ENCODE measurements at regions of chr6 and their contacts with region 1.

Region 1: GRCh38 chr6:35468181-35468979 is at the start of gene RPL10A:
- DNase-seq: peak; percentile 94 to 95
- H3K4me3 ChIP-seq: peak within 1 kb of the TSS; percentile 86
- H3K4me3 Mint-ChIP-seq: peak within 1 kb of the TSS; percentile 86
- H3K27ac Mint-ChIP-seq: peak within 1 kb of the TSS; percentile 88
- H3K4me1 ChIP-seq: peaks cover 30% of the 10 kb centered on the region
- H3K4me1 Mint-ChIP-seq: peaks cover 20% of the 10 kb centered on the region
- H3K27me3 ChIP-seq: no peaks in the 10 kb centered on the region
- H3K27me3 Mint-ChIP-seq: no peaks in the 10 kb centered on the region
- CTCF ChIP-seq: peak; percentile 94 to 96
- total RNA-seq, gene RPL10A: 1,082 and 1,106 TPM in 2 replicates

Region 2: DNA sequence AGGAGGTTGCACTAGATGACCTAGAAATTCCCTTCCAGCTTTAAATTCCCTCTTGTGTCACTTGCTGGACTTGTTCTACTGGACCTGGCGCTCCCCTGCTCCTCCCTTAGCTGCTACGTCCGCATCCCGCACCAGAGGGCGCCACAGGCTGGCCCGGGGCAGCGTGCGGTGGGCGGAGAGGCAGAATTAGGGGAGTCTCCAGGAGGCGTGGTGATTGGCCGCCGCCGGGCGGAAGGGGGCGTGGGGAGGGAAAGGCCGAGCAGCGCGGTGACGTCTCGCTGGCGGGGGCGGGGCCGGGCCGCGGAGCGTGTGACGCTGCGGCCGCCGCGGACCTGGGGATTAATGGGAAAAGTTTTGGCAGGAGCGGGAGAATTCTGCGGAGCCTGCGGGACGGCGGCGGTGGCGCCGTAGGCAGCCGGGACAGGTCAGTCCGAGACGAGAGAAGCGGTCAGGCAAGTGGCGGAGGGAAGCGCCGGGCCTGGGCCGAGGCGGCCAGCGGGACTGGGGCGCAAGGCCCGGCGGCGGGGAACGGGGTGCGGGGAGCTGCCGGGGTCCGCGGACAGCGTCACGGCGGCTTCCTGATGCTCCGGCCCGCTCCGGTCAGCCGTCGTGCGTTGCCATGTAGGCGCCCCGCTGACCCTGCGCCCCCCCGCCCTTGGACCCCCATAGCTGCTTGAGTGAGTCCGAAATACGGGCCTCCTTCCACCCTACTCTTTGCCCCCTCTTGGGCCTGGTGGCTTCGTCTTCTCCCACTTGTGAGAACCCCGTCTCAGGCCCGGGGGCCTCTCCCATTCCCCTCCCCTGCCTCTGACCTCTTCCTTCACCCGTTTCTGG is 125.9 kb before region 1 on chr6 and contains the start of gene PPARD:
- CTCF ChIA-PET with region 1: interaction called, 4 read pairs
- POLR2A ChIA-PET with region 1: interaction called, 6 read pairs
- intact Hi-C with region 1: loop called (anchors 1 kb)
- DNase-seq: peak; percentile 97 to 99
- H3K4me3 ChIP-seq: peak within 1 kb of the TSS; percentile 84
- H3K4me3 Mint-ChIP-seq: peak within 1 kb of the TSS; percentile 85
- H3K27ac Mint-ChIP-seq: peak within 1 kb of the TSS; percentile 78
- H3K4me1 ChIP-seq: peaks cover 6% of the 10 kb centered on the region
- H3K4me1 Mint-ChIP-seq: no peaks in the 10 kb centered on the region
- H3K27me3 ChIP-seq: no peaks in the 10 kb centered on the region
- H3K27me3 Mint-ChIP-seq: no peaks in the 10 kb centered on the region
- CTCF ChIP-seq: peak; percentile 88 to 97
- total RNA-seq, gene PPARD: 11.3 and 12.0 TPM in 2 replicates

Region 3: DNA sequence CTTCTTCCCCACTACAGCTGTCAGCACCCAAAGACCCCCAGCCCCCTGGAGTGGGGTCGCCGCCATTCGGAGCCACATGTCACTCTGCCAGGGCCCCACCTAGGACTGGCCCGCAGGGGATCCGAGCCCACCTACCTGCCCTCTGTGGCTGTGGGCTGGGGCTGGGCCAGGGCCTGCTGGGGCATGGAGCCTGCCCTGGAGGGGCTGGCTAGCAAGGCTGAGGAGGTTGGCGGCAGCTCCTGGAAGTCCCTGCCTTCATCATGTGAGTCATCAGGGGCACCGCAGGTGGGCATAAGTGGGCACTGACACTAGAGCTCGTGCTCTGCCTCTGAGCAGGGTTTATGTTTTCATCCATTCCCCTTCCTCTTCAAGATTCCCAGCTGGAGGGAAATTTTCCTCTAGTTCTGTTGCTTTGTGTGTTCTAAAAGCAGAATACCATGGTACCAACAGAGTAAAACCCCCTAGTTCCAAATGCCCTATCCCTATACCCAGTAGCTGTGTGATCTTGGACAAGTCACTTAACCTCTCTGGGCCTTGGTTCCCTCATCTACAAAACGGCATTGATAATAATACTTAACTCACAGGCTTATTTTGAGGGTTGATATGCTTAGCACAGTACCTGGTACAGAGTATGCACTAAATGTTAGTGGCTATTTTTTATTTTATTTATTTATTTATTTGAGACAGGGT is 24.9 kb before region 1 on chr6:
- CTCF ChIA-PET with region 1: no interaction called
- POLR2A ChIA-PET with region 1: no interaction called
- intact Hi-C with region 1: no loop called
- DNase-seq: no peak
- H3K4me3 ChIP-seq: no peak overlapping the region
- H3K4me3 Mint-ChIP-seq: no peak overlapping the region
- H3K27ac Mint-ChIP-seq: no peak overlapping the region
- H3K4me1 ChIP-seq: no peaks in the 10 kb centered on the region
- H3K4me1 Mint-ChIP-seq: no peaks in the 10 kb centered on the region
- H3K27me3 ChIP-seq: no peaks in the 10 kb centered on the region
- H3K27me3 Mint-ChIP-seq: no peaks in the 10 kb centered on the region
- CTCF ChIP-seq: no peak